Vagina (tissue), 2 donors: ENCODE measurements at regions of chr5 and their contacts with region 1.

Region 1: DNA sequence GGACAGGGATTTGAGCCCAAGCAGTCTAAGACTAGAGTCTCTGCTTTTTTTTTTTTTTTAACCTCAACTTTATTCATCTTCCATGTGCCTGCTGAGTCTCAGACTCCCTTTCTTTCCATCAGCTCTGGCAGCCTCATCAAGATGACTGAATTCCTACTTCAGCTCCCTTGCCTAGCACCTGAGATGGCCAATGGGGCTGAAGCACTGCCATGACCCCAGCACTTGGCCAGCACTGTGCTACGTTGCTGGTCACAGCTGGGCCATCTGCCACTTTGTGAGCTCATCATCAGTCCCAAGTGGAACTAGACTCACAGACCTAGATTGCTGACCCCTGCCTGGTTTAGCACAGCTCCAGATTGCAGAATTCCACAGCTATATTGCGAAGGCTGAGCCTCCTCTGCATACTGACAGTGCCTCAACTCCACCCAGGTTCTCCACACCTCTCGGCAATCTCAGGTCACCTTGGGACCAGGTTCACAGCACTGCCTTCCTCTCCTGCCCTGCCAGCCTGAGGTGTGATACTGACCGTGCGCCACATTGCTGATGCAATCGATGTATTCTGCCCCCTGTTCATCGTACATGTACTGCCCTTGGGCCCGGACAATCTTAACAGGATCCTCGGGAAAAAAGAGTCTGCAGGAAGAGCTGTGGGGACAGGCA is 1.6 kb downstream of the PHYKPL start:
- DNase-seq: no peak
- H3K4me3 ChIP-seq: peak overlapping the region; percentile 66 to 78
- H3K27ac ChIP-seq: peak overlapping the region; percentile 97
- H3K4me1 ChIP-seq: peaks cover 36% of the 10 kb centered on the region
- H3K27me3 ChIP-seq: no peaks in the 10 kb centered on the region
- CTCF ChIP-seq: no peak
- POLR2A ChIP-seq: no peak

Region 2: GRCh38 chr5:177113566-177114424 is 1117.2 kb before region 1 on chr5:
- intact Hi-C with region 1: no loop called
- DNase-seq: no peak
- H3K4me3 ChIP-seq: no peak overlapping the region
- H3K27ac ChIP-seq: no peak overlapping the region
- H3K4me1 ChIP-seq: peaks cover 12% of the 10 kb centered on the region
- H3K27me3 ChIP-seq: no peaks in the 10 kb centered on the region
- CTCF ChIP-seq: peak; percentile 83 to 96 (median 86)
- POLR2A ChIP-seq: no peak

Region 3: DNA sequence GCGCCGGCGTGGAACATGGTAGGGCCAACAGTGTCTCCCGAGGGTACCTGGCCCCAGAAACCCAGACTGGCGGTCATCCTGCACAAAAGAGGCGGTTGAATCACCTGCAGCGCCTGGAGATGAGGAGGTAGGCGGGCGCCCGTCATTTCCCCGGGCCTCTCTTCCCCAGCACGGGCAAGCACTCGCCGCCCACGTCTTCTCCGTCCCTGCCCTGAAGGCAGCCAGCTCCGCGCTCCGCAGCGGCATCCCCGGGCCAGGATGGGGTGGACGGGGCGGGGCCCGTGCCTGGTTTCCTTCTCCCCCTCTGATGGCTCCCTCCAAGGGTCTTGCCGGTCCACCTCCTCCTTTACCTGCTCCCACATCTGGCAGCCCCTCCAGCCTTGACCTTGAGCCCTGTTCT is 144.7 kb before region 1 on chr5:
- intact Hi-C with region 1: no loop called
- DNase-seq: no peak
- H3K4me3 ChIP-seq: no peak overlapping the region
- H3K27ac ChIP-seq: no peak overlapping the region
- H3K4me1 ChIP-seq: no peaks in the 10 kb centered on the region
- H3K27me3 ChIP-seq: no peaks in the 10 kb centered on the region
- CTCF ChIP-seq: no peak
- POLR2A ChIP-seq: no peak

Region 4: GRCh38 chr5:178204182-178204894 is 26.7 kb before region 1 on chr5 and contains the start of gene HNRNPAB:
- intact Hi-C with region 1: loop called (anchors 2 kb)
- DNase-seq: peak in 1 of 2 donors; percentile 99
- H3K4me3 ChIP-seq: peak within 1 kb of the TSS; percentile 59 to 93
- H3K27ac ChIP-seq: peak within 1 kb of the TSS; percentile 77
- H3K4me1 ChIP-seq: peaks cover 42% of the 10 kb centered on the region
- H3K27me3 ChIP-seq: no peaks in the 10 kb centered on the region
- CTCF ChIP-seq: no peak
- POLR2A ChIP-seq: peak in 1 of 2 donors; percentile 99
- total RNA-seq, gene HNRNPAB: 92.6 TPM